ENCODE measurements at regions of chr4 and their contacts with region 1.

Region 1: GRCh38 chr4:88523325-88524129 is at the start of gene PYURF:
- ATAC-seq: peak; percentile 82 to 98 (median 96)
- H3K4me3 ChIP-seq: peak within 1 kb of the TSS; percentile 67 to 91 (median 88)
- H3K27ac ChIP-seq: peak within 1 kb of the TSS; percentile 84 to 90
- H3K4me1 ChIP-seq: peaks cover 0 to 12% of the 10 kb centered on the region in 2 donors
- total RNA-seq, gene PYURF: 48.4 to 95.5 (median 68.7) TPM

Region 2: DNA sequence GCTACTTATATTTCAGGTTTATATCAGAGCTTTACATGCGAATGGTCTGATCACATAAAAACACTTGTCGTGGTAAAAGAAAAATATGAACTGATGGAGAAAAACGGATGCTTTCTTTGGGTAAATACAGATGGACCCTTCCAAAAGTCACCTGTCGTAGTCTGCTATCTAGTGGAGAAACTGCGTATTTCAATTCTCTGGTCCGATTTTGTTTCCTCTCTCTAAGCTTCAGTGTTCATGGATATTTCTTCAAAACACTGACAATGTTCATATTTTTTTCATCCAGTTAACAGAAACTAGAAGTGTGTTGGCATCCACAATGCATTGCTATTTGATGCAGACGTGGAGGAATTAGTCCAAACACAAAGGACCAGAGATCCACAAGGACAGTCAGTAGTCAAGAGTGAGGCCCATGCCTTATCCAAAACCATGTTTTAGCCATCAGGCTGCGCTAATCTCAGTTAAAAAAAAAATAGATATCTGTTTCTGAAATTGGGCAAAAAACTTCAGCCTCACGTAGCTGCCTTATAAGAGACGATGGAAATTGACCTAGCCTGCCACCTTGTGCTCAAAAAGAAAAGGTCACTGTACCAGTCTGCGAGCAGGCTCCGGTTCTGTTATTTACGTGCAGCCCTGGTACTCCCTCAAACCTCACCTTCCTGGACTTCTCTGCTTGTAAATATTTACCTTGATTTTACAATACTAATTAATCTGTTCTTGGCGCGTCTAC is 674.7 kb before region 1 on chr4:
- in situ Hi-C with region 1: loop called in 2 of 9 experiments (anchors 25 kb)
- ATAC-seq: peak; percentile 74 to 98 (median 82)
- H3K4me3 ChIP-seq: peak overlapping the region in 2 of 5 donors; percentile 4 to 14
- H3K27ac ChIP-seq: no peak overlapping the region
- H3K4me1 ChIP-seq: peaks cover 0 to 3% of the 10 kb centered on the region in 2 donors

Region 3: GRCh38 chr4:88211473-88212252 is 311.9 kb before region 1 on chr4:
- in situ Hi-C with region 1: loop called in 6 of 9 experiments (anchors 10 to 25 kb)
- ATAC-seq: peak in 7 of 8 experiments; percentile 33 to 69 (median 52)
- H3K4me3 ChIP-seq: no peak overlapping the region
- H3K27ac ChIP-seq: no peak overlapping the region
- H3K4me1 ChIP-seq: no peaks in the 10 kb centered on the region

Region 4: DNA sequence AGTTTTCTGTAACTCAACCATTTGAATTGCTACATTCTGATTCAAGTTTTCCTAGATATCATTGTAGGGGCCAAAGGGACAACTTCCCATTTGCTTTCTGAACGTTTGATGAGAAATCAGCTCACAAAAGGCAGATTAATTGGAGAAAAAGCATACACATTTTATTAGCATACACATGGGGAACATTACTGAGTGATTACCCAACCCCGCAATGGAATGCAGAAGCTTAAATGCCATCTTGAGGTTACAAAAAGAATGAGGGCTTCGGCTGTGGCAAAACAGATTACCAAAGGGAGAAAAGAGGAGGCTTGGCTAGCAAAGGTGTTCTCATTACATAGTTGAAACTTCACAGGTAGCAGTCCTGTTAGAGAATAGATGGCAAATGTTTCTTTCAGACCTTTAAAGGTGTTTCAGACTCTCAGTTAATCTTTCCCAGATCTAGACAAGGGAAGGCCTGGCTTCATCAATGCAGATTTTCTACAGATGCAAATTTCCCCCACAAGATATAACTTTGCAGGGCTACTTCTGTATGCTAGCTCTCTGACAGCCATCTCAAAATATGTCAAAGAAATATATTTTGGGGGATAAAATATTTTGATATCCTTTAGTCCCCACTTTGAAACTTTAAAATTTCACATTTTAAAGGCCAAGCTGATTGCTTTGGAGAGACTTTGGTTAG is 171.3 kb before region 1 on chr4:
- in situ Hi-C with region 1: loop called in 2 of 9 experiments (anchors 25 kb)
- ATAC-seq: peak in 3 of 8 experiments; percentile 62 to 97 (median 95)
- H3K4me3 ChIP-seq: no peak overlapping the region
- H3K27ac ChIP-seq: no peak overlapping the region
- H3K4me1 ChIP-seq: no peaks in the 10 kb centered on the region

Region 5: DNA sequence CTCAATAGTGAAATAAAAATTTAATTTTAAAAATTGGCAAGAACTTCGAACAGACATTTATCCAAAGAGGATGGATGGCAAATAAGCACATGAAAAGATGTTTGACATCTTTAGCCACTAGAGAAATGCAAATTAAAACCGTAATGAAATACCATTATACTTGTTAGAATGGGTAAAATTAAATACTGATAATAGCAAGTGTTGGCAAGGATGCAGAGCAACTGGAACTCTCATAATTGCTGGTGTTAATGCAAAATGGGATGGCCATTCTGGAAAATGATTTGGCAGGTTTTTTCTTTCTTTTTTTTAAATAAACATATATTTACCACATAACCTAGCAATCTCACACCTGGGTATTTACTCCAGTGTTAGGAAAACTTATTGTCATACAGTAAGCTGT is 120.4 kb after region 1 on chr4:
- in situ Hi-C with region 1: no loop called
- ATAC-seq: no peak
- H3K4me3 ChIP-seq: no peak overlapping the region
- H3K27ac ChIP-seq: no peak overlapping the region
- H3K4me1 ChIP-seq: no peaks in the 10 kb centered on the region

Region 6: GRCh38 chr4:88792268-88792781 is 268.8 kb after region 1 on chr4:
- in situ Hi-C with region 1: no loop called
- ATAC-seq: peak in 7 of 8 experiments; percentile 13 to 86 (median 54)
- H3K4me3 ChIP-seq: no peak overlapping the region
- H3K27ac ChIP-seq: no peak overlapping the region
- H3K4me1 ChIP-seq: no peaks in the 10 kb centered on the region

Region 7: GRCh38 chr4:89024051-89024675 is 500.6 kb after region 1 on chr4:
- in situ Hi-C with region 1: loop called in 4 of 9 experiments (anchors 25 kb)
- ATAC-seq: peak; percentile 76 to 93 (median 88)
- H3K4me3 ChIP-seq: no peak overlapping the region
- H3K27ac ChIP-seq: no peak overlapping the region
- H3K4me1 ChIP-seq: no peaks in the 10 kb centered on the region